HAP-1 (cell line): ENCODE measurements at regions of chr22 and their contacts with region 1.

Region 1: GRCh38 chr22:30104501-30105156 is 24.4 kb downstream of the HORMAD2 start:
- DNase-seq: no peak
- H3K4me3 ChIP-seq: no peak overlapping the region
- H3K4me1 ChIP-seq: no peaks in the 10 kb centered on the region
- H3K27me3 ChIP-seq: peaks cover 9% of the 10 kb centered on the region

Region 2: DNA sequence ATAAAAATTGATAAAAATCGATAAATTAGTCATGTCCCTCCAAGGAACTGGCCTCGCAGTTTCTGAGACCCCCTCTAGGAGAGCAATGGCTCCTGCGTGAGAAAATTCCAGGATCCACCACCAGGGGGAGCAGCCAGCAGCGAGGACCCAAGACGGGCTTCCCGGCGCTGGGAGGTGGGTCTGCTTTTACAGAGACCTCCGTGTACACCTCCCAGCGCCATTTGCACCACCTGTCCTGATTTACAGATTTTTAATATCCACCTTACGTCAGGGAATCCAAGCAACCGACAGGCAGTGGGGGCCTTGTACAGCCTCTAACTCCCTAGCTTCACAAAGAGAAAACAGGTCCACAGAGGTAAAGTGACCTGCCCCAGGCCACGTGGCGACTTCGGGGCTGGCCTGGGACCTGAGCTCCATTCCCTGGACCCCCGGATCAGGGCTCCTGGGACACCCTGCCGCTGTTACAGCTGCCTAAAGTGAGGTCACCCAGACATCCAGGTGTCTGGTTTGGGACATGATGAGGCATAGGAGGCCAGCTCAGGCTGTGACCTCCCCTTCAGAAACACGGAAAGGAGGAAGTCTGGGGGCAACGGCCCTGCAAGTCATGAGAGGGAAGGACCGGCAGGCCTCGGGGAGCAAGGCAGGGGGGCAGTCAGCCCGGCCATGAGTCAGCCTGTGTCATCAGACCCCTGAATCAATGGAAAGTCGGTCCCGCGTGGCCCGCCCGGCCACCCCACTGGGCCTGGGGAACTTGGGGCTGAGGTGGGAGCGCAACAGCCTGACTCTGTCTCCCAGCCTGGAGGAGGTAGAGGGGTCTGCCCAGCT is 158.5 kb after region 1 on chr22:
- in situ Hi-C with region 1: loop called (anchors 5 kb)
- DNase-seq: peak; percentile 48 to 94
- H3K4me3 ChIP-seq: no peak overlapping the region
- H3K4me1 ChIP-seq: peaks cover 4% of the 10 kb centered on the region
- H3K27me3 ChIP-seq: no peaks in the 10 kb centered on the region

Region 3: DNA sequence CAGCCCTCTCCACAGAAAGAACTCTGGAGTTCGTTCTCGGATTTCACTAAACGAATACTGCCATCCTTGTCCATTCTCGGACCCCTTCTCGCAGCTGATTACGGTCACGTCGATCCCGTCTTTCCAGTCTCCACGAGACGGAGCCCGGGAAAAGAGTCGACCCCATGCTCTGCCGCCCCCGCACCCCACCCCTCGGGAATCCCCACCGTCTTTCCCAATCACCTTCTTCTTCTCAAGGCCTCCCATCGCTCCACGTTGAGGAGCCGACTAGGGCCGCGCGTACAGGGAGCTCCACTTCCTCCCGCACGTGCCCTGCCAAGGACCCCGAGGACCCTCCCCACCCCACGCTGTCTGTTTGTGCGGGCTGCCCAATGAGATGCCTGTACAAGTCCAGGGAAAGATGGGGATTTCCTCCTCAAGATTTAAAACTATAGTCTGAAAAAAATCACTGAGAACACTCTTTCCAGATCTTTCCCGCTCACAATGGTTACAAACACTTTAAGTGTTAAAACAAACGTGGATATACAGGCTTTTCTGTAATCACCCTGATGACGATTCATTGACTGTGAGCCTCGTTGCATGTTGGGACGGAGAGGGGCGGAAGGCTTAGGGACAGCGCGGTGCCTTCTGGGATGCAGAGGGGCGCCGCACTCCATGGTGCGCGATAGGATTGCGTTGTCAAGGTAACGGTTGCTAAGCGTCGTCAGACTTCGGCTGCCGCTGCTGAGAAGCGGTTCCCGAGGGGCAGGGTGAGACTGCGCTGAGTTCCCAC is 487.1 kb after region 1 on chr22 and contains the start of gene PES1:
- in situ Hi-C with region 1: no loop called
- DNase-seq: peak; percentile 97
- H3K4me3 ChIP-seq: peak within 1 kb of the TSS; percentile 64
- H3K4me1 ChIP-seq: peaks cover 4% of the 10 kb centered on the region
- H3K27me3 ChIP-seq: peaks cover 12% of the 10 kb centered on the region